ENCODE measurements at regions of chr13 and their contacts with region 1.

Region 1: DNA sequence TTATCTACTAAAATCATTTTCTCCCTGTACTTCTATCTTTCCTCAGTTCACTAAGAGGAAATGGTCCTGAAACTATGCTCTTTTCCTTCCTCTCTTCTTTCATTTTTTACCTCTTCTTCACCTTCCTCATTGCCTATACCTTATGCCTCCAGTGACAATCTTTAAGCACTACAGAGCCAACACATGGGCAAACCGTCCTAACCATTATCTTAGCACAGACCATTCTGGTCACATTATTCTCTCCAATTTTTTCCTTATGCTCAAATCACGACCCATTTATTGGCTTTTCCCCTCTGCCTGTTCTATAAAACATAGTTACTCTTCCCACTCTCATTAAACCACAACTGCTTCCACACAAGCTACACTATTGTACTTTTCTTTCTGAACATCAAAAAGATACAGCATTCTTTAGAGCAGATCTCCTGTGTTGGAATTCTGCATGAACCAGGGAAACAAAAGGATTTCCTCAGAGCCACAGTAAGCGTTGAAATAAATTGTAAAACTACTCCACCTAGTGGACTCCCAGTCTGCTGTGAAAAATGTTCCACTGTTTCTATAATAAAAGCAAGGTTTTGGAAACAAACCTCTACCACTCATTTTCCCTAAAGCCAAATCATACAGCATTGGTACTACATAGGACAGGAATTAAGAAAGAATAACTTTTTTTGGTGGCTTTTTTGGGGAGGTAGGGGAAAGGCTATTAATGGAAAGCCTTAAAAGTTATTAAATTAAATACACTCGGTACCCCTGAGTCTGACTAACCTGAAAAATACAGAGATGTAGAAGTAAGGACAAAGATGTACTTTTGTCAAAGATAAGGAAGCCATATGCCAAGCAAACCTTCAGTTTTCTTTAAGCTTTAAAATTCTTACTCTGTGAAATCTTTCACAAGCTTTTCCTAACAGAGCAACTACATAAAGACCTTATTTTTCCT is 19.5 kb downstream of the NUFIP1 start:
- DNase-seq: no peak
- ATAC-seq: peak; percentile 69

Region 2: GRCh38 chr13:44484562-44485138 is 485.2 kb before region 1 on chr13:
- intact Hi-C with region 1: loop called in 1 of 2 experiments (anchors 5 kb)
- DNase-seq: no peak
- ATAC-seq: no peak

Region 3: GRCh38 chr13:45108716-45109101 is 138.9 kb after region 1 on chr13:
- intact Hi-C with region 1: no loop called
- DNase-seq: no peak
- ATAC-seq: no peak

Region 4: DNA sequence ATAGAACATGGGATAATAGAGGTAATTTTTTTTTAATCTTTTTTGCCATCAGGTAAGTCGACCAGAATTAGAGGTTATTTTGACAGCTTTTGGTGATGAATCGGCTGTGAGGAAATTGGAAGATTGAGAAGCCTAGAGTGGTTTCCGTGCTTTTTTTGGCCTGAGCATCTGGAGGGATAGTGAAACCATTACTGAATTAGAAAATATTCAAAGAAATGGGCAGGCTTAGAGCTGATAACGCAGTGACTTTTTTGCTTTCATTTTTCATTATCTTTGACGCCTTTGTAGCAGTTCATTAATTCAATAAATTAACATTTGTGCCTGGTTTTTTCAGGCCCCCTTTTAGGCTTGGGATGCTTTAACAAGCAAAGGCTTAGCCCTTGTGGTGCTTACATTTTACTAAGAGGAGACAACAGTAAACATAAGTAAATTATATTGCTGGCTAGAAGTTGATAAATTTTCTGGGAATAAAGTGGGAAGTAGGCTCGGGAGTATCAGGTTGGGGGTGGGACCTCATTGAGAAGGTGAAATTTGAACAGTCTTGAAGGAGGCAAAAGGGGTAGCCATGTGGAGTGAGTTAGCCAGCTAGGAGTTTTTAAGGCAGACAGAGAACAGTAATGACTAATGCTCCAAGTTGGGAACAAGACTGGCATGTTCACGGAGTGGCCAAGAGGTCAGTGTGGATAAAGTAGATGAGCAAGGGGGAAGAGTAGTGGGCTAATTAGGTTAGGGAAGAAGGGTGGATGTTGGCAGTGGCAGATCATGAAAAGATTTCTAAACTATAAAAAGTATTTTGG is 186.9 kb after region 1 on chr13:
- intact Hi-C with region 1: no loop called
- DNase-seq: no peak
- ATAC-seq: no peak